Lower lobe of right lung (tissue), 2 donors: ENCODE measurements at regions of chr6 and their contacts with region 1.

Region 1: DNA sequence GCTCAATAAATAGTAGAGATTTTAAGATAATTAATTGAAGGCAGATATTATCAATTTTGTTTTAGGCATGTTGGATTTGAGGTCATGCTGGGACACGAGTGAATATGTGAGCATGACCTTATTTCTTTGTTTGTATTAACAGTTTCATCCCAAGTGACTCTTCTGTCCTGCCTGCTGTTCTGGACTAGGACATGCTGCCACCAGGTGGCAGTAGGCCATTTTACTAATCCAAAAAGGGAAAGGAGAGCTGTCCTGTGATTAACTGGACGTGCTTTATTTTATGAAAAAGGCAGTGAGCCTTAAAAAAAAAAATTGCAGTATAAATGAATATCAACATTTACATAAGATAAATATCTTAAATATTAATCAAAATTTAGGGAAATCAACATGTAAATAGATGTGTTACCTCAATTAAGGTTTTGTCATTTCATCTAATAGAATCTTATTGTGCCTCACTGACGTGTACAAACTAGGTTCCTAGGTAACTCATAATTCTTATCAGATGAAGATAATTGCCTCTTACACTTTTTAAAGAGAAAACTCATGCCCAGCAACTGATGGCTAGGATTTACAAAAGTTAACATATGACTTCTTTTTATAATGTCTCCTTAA is 49.8 kb downstream of the FRK start:
- DNase-seq: peak; percentile 62
- ATAC-seq: peak; percentile 82 to 89
- H3K4me3 ChIP-seq: no peak overlapping the region
- H3K27ac ChIP-seq: no peak overlapping the region
- H3K4me1 ChIP-seq: peaks cover 36% of the 10 kb centered on the region
- H3K27me3 ChIP-seq: no peaks in the 10 kb centered on the region
- CTCF ChIP-seq: peak; percentile 87

Region 2: GRCh38 chr6:116096979-116097816 is 86.3 kb after region 1 on chr6:
- intact Hi-C with region 1: loop called (anchors 5 kb)
- DNase-seq: no peak
- ATAC-seq: no peak
- H3K4me3 ChIP-seq: no peak overlapping the region
- H3K27ac ChIP-seq: no peak overlapping the region
- H3K4me1 ChIP-seq: peaks cover 17% of the 10 kb centered on the region
- H3K27me3 ChIP-seq: no peaks in the 10 kb centered on the region
- CTCF ChIP-seq: peak; percentile 60